H1 (cell line): ENCODE measurements at regions of chr10 and their contacts with region 1.

Region 1: GRCh38 chr10:21740989-21741388 is 207.0 kb downstream of the MLLT10 start:
- DNase-seq: no peak
- H3K4me3 ChIP-seq: no peak overlapping the region
- H3K27ac ChIP-seq: no peak overlapping the region
- H3K4me1 ChIP-seq: peaks cover 0 to 5% (median 3%) of the 10 kb centered on the region in 4 experiments; a peak in 3 of 7 replicates
- H3K27me3 ChIP-seq: no peaks in the 10 kb centered on the region
- CTCF ChIP-seq: no peak
- EP300 ChIP-seq: no peak
- POLR2A ChIP-seq: no peak
- RAD21 ChIP-seq: no peak

Region 2: GRCh38 chr10:21751341-21752310 is 10.6 kb after region 1 on chr10:
- CTCF ChIA-PET with region 1: interaction called, 4 read pairs
- POLR2A ChIA-PET with region 1: interaction called, 11 read pairs
- DNase-seq: peak in 1 of 2 experiments; percentile 66
- H3K4me3 ChIP-seq: peak overlapping the region in 1 of 4 experiments; percentile 32; a peak in 1 of 8 replicates
- H3K27ac ChIP-seq: peak overlapping the region; percentile 90
- H3K4me1 ChIP-seq: peaks cover 13 to 40% (median 31%) of the 10 kb centered on the region in 4 experiments
- H3K27me3 ChIP-seq: no peaks in the 10 kb centered on the region
- CTCF ChIP-seq: no peak
- EP300 ChIP-seq: peak in 1 of 2 experiments; percentile 85; a peak in 1 of 3 replicates
- POLR2A ChIP-seq: peak in 1 of 2 experiments; percentile 47; a peak in 1 of 3 replicates
- RAD21 ChIP-seq: no peak